ENCODE measurements at regions of chr15 and their contacts with region 1.

Region 1: DNA sequence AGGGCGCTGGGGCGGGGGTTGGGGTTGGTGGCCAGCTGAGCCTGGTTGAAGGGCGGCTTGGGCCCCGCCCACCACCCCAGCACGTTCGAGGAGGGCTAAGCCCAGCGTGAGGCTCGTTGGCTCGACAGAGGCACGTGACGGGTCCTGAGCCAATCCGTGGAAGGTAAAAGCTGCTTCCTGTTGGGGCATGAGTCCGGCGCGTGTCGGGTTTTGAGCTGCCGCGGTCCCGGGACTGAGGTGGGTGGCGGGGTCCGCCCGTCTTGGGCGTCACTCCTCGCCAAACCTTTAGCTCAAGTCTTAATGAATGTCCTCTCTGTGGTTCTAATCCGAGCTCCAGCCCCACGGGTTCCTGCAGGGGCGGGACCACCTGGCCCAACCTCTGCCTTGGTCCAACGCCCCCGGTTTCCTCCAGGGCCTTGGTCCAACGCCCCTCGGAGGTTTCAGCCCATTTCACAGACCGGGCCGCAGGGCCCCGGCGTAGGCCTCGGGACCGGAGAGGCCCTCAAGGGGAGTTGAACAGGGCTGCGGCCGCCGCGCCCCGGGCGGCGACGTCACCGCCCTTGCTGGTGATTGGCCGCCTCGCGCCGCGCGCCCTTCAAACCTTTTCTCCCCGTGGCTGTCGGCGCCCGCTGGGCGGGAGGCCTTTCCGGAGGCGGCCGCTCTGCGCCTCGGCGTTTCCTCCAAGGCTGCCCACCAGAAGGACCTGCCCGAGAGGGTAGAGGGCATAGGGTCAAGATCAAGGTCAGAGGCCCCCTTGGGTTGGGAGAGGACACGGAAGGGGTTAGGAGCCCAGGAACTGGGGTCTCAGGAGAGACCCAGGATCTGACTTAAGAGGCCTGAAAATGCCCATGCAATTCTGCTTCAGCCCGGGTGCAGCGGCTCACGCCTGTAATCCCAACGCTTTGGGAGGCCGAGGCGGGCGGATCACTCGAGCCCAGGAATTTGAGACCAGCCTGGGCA is at the start of gene RCCD1:
- DNase-seq: peak; percentile 98

Region 2: DNA sequence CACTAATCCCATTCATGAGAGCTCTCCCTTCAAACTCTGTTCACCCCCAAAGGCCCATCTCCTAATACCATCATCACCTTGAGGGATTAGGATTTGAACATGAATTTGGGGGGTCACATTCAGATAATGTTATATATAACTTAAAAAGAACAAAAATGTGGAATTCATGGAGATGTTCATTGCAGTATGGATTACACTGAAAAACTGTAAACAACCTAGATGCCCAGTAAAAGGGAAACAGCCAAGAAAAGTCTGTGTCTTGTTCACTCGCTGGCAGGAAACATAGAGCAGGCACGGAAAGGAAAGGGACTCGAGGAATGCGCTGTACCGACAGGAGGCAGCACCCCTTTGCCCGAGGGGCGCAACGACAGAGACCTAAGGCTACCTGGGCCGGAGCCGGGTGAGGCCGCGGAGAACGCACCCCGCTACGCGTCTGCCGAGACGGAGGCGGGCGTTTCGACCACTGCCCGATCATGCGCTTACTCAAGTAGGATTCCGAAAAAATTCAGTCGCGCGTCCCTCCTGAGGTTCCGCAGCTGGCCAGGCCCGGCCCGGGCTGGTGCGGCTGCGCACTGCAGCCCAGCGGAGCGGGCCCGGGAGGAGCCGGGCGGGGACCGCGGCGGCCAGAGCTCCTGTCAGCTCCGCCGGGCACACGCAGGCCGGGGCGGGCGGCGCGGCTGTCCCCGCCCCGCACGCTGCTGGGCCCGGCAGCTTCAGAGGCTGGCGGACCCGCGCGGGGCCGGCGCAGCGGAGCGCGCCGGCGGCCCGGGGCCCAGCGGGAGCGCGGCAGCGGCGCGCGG is 52.8 kb before region 1 on chr15:
- CTCF ChIA-PET with region 1: no interaction called
- POLR2A ChIA-PET with region 1: interaction called, 13 read pairs
- DNase-seq: peak; percentile 96

Region 3: DNA sequence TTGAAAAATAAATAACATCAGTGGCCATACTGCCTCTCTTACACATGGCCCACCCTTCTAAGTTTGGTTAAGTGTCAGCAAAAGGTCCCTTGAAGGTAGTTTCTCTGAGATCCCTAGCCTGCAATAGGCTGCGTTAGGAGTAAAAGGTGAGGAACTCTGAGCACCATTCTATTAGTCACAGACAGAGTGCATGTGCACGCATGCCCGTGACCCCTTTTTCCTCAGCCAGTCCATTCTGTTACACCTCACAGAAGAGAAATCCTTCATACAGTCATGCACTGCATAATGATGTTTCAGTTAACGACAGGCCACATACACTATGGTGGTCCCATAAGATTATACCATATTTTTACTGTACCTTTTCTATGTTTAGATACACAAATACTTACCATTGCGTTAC is 12.2 kb after region 1 on chr15:
- CTCF ChIA-PET with region 1: interaction called, 12 read pairs
- POLR2A ChIA-PET with region 1: interaction called, 3 read pairs
- DNase-seq: no peak

Region 4: GRCh38 chr15:91032919-91033803 is 78.2 kb after region 1 on chr15:
- CTCF ChIA-PET with region 1: interaction called, 11 read pairs
- POLR2A ChIA-PET with region 1: interaction called, 3 read pairs
- DNase-seq: peak; percentile 48

Region 5: GRCh38 chr15:91049378-91050127 is 94.6 kb after region 1 on chr15:
- CTCF ChIA-PET with region 1: interaction called, 10 read pairs
- POLR2A ChIA-PET with region 1: interaction called, 3 read pairs
- DNase-seq: peak; percentile 59